Right ventricle myocardium inferior (tissue), 1 donor: ENCODE measurements at regions of chr1 and their contacts with region 1.

Region 1: DNA sequence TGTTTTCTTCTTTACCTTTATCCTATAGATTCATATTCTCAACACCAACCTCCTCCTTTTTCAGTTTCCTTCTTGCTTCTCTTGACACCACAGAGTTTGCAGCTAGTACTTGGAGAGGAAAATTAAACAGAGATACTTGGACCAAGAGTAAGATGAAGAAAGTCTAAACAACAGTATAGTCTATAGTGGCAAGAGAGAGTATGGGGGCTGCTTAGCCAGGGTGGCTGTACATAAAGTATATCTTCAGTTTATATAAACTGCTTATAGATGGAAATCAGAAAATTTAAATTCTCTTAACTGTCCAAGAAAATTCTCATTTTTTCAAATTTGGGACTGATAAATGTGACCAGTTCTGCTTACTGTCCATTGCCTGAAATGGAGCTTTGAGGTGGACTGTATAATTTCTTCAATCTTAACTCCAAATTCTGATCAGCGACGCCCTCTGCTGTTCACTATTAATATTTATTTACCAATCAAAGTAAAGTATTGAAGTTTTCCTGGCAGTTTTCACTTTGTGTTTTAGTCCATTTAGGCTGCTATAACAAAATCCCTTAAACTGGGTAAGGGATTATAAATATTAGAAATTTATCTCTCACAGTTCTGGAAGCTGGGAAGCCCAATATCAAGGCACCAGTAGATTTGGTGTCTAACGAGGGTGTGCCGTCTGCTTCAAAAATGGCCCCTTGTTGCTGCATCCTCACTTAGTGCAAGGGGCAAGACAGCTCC is 14.8 kb upstream of the METTL18 start:
- DNase-seq: no peak
- ATAC-seq: no peak

Region 2: GRCh38 chr1:169711469-169712281 is 97.9 kb before region 1 on chr1 and contains the start of gene SELL:
- intact Hi-C with region 1: loop called (anchors 10 kb)
- DNase-seq: no peak
- ATAC-seq: peak; percentile 92
- total RNA-seq, gene SELL: 1.1 TPM